ENCODE measurements at regions of chr4 and their contacts with region 1.

Region 1: DNA sequence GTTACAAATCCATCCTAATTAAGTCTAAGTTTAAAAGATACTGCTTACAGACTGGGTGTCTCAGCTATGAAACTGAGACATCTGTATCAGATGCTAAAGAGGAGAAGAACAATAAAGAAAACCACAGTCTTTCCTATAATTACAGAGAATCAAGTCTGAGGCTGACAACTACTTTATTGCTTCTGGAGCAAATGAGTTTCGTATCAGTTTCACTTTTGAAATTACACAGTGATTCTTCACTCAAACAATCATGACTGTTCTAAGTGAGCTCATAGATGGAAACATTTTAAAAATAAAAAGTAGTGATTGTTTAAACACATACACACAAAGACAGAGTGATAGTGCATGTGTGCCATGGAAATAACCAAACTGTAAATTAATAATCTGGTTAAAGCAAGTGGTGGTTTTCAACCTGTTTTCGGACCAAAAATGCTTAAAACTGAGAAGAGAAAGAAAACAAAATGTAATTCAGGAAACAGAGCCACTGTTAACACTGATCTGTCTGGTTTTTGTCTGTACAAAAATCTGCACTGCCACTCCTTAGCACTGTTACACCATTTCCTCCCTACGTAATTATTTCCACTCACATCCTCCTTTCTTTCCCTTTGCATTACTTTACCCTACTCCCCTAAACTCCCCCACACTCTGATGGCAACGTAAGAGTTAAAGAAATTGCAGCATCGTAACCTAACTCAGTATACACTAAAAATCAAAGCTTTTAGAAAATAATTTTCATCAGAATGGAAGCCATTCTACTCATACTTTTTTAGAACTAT is 12.5 kb downstream of the RFC1 start:
- DNase-seq: peak; percentile 40
- ATAC-seq: peak; percentile 84
- H3K4me3 Mint-ChIP-seq: peak overlapping the region; percentile 83
- H3K27ac Mint-ChIP-seq: peak overlapping the region; percentile 98
- H3K4me1 Mint-ChIP-seq: peaks cover 55% of the 10 kb centered on the region
- H3K27me3 Mint-ChIP-seq: no peaks in the 10 kb centered on the region

Region 2: GRCh38 chr4:39231660-39232059 is 122.0 kb before region 1 on chr4:
- CTCF ChIA-PET with region 1: no interaction called
- POLR2A ChIA-PET with region 1: no interaction called
- DNase-seq: no peak
- ATAC-seq: no peak
- H3K4me3 Mint-ChIP-seq: no peak overlapping the region
- H3K27ac Mint-ChIP-seq: no peak overlapping the region
- H3K4me1 Mint-ChIP-seq: no peaks in the 10 kb centered on the region
- H3K27me3 Mint-ChIP-seq: no peaks in the 10 kb centered on the region

Region 3: DNA sequence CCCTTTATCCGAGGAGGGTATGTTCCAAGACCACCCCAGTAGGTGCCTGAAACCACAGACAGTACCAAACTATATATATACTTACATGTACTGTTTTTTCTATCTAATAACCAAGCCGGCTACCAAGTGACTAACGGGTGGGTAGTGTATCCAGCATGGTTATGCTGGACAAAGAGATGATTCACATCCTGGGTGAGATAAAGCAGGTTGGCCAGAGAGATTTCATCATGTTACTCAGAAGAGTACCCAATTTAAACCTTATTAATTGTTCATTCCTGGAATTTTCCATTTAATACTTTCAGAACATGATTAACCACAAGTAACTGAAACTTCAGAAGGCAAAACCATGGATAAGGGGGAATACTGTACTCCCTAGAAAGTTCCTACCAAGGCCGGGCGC is 34.0 kb before region 1 on chr4:
- CTCF ChIA-PET with region 1: no interaction called
- POLR2A ChIA-PET with region 1: no interaction called
- DNase-seq: no peak
- ATAC-seq: no peak
- H3K4me3 Mint-ChIP-seq: no peak overlapping the region
- H3K27ac Mint-ChIP-seq: no peak overlapping the region
- H3K4me1 Mint-ChIP-seq: no peaks in the 10 kb centered on the region
- H3K27me3 Mint-ChIP-seq: no peaks in the 10 kb centered on the region

Region 4: GRCh38 chr4:39365830-39366771 is 12.4 kb after region 1 on chr4 and contains the start of gene RFC1:
- CTCF ChIA-PET with region 1: interaction called, 8 read pairs
- POLR2A ChIA-PET with region 1: interaction called, 63 read pairs
- DNase-seq: peak; percentile 96
- ATAC-seq: peak; percentile 92
- H3K4me3 Mint-ChIP-seq: peak within 1 kb of the TSS; percentile 95
- H3K27ac Mint-ChIP-seq: peak within 1 kb of the TSS; percentile 95
- H3K4me1 Mint-ChIP-seq: peaks cover 29% of the 10 kb centered on the region
- H3K27me3 Mint-ChIP-seq: no peaks in the 10 kb centered on the region
- total RNA-seq, gene RFC1: 79.6 to 82.2 TPM

Region 5: DNA sequence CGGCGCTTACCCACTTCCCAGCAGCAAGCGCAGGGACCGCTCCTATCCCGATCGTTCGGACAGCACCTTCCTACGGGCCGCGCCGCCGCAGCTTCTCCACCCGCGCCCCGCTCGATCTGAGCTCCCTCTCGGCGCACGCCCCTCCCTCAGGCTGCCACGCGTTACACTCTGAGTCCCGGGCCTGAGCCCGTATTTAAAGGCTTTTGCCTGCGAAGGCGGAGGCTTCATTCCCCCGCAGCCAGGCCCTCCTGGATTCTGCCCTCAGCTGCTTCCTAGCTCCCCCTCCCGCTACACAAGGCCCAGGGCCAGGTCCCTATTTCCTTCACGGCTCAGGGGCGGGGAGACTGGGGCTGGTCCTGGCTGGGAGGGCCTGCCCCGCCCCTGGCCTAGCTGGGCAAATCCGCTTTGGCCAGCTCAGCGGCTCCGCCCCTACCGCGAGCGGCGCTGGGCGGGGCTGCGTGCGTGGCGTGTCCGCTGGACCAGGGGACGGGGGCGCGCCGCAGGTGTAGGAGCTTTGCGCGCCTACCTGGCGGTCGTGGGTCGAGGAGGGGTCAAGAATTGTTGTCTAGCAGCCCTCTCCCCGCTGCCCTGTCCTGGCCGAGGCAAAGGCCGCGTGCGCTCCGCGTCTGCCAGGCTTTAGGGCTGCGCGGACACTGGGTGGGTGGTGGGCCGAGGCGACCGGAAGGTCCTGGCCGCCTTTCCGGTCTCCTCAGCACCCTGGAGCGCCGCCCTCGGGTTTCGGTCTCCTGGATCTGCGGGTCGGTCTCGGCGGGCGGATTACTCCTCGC is 173.8 kb after region 1 on chr4 and contains the start of gene UGDH:
- CTCF ChIA-PET with region 1: no interaction called
- POLR2A ChIA-PET with region 1: no interaction called
- DNase-seq: peak; percentile 93
- ATAC-seq: peak; percentile 99
- H3K4me3 Mint-ChIP-seq: peak within 1 kb of the TSS; percentile 98
- H3K27ac Mint-ChIP-seq: peak within 1 kb of the TSS; percentile 88
- H3K4me1 Mint-ChIP-seq: peaks cover 20% of the 10 kb centered on the region
- H3K27me3 Mint-ChIP-seq: peaks cover 2% of the 10 kb centered on the region
- total RNA-seq, gene UGDH: 11.1 to 11.7 TPM

Measured in activated CD8-positive, alpha-beta T cell treated with anti-CD3 and anti-CD28 coated beads, Interleukin-2, amount 10 ng/mL, durations not matched to agents 7 days and 5 days (primary cell).